ENCODE measurements at regions of chr16 and their contacts with region 1.

Region 1: GRCh38 chr16:84607694-84608093 is 10.2 kb downstream of the COTL1 start:
- DNase-seq: peak in 4 of 9 experiments; percentile 30 to 72 (median 48)
- ATAC-seq: peak; percentile 34
- H3K4me3 ChIP-seq: peak overlapping the region; percentile 3 to 15
- H3K4me3 Mint-ChIP-seq: peak overlapping the region; percentile 55
- H3K27ac ChIP-seq: peak overlapping the region; percentile 16 to 62
- H3K27ac Mint-ChIP-seq: peak overlapping the region; percentile 85
- H3K4me1 ChIP-seq: peaks cover 93% of the 10 kb centered on the region
- H3K4me1 Mint-ChIP-seq: peaks cover 93% of the 10 kb centered on the region
- H3K27me3 ChIP-seq: no peaks in the 10 kb centered on the region
- H3K27me3 Mint-ChIP-seq: no peaks in the 10 kb centered on the region
- CTCF ChIP-seq: no peak

Region 2: GRCh38 chr16:84593825-84594724 is 13.6 kb before region 1 on chr16:
- CTCF ChIA-PET with region 1: interaction called, 9 read pairs
- POLR2A ChIA-PET with region 1: interaction called, 59 read pairs
- intact Hi-C with region 1: loop called in 1 of 2 experiments (anchors 1 kb)
- DNase-seq: peak; percentile 69 to 98 (median 84)
- ATAC-seq: peak; percentile 85
- H3K4me3 ChIP-seq: peak overlapping the region; percentile 37 to 46
- H3K4me3 Mint-ChIP-seq: peak overlapping the region; percentile 83
- H3K27ac ChIP-seq: peak overlapping the region; percentile 75 to 94
- H3K27ac Mint-ChIP-seq: peak overlapping the region; percentile 98
- H3K4me1 ChIP-seq: peaks cover 59% of the 10 kb centered on the region
- H3K4me1 Mint-ChIP-seq: peaks cover 72% of the 10 kb centered on the region
- H3K27me3 ChIP-seq: no peaks in the 10 kb centered on the region
- H3K27me3 Mint-ChIP-seq: no peaks in the 10 kb centered on the region
- CTCF ChIP-seq: no peak

Measured in CD8-positive, alpha-beta T cell (primary cell).